MCF 10A (cell line): ENCODE measurements at regions of chr7 and their contacts with region 1.

Region 1: DNA sequence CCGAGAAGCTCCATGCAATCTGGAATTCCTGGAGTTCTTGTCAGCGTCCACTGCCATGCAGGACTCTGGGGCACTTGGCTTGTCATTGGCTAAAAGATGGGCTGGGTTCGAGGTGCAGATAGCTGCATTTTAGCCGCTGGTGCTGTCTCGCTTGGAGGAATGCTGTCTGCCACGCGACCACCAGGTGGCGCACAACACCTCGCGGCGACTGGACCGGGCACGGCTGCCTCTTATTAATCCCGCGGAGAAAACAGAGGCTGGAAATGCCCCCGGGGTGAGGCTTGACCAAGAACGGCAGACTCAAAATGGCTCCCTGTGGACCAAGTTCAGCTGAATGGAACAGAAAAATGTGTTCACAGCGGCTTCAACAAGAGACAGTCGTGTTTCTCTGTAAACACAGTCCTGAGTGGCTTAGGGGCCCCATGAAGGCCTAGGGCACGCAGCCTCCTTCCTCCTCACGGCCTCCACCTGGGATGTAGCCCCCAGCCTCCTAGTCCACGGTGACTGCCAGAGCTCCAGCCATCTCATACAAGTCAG is 46.2 kb downstream of the AOC1 start:
- DNase-seq: peak; percentile 61
- H3K4me3 Mint-ChIP-seq: no peak overlapping the region
- H3K27ac Mint-ChIP-seq: no peak overlapping the region
- H3K4me1 Mint-ChIP-seq: peaks cover 14% of the 10 kb centered on the region
- H3K27me3 Mint-ChIP-seq: peaks cover 26% of the 10 kb centered on the region
- CTCF ChIP-seq: peak; percentile 86

Region 2: GRCh38 chr7:150909200-150909995 is 10.9 kb after region 1 on chr7:
- CTCF ChIA-PET with region 1: interaction called, 12 read pairs
- POLR2A ChIA-PET with region 1: interaction called, 4 read pairs
- intact Hi-C with region 1: no loop called
- DNase-seq: no peak
- H3K4me3 Mint-ChIP-seq: no peak overlapping the region
- H3K27ac Mint-ChIP-seq: no peak overlapping the region
- H3K4me1 Mint-ChIP-seq: peaks cover 4% of the 10 kb centered on the region
- H3K27me3 Mint-ChIP-seq: peaks cover 42% of the 10 kb centered on the region
- CTCF ChIP-seq: no peak

Region 3: GRCh38 chr7:150931199-150931869 is 32.8 kb after region 1 on chr7:
- CTCF ChIA-PET with region 1: interaction called, 10 read pairs
- POLR2A ChIA-PET with region 1: no interaction called
- intact Hi-C with region 1: no loop called
- DNase-seq: no peak
- H3K4me3 Mint-ChIP-seq: no peak overlapping the region
- H3K27ac Mint-ChIP-seq: no peak overlapping the region
- H3K4me1 Mint-ChIP-seq: no peaks in the 10 kb centered on the region
- H3K27me3 Mint-ChIP-seq: peaks cover 4% of the 10 kb centered on the region
- CTCF ChIP-seq: no peak

Region 4: GRCh38 chr7:150962553-150963399 is 64.2 kb after region 1 on chr7:
- CTCF ChIA-PET with region 1: interaction called, 11 read pairs
- POLR2A ChIA-PET with region 1: no interaction called
- intact Hi-C with region 1: no loop called
- DNase-seq: peak; percentile 31
- H3K4me3 Mint-ChIP-seq: no peak overlapping the region
- H3K27ac Mint-ChIP-seq: no peak overlapping the region
- H3K4me1 Mint-ChIP-seq: no peaks in the 10 kb centered on the region
- H3K27me3 Mint-ChIP-seq: peaks cover 32% of the 10 kb centered on the region
- CTCF ChIP-seq: peak; percentile 92

Region 5: DNA sequence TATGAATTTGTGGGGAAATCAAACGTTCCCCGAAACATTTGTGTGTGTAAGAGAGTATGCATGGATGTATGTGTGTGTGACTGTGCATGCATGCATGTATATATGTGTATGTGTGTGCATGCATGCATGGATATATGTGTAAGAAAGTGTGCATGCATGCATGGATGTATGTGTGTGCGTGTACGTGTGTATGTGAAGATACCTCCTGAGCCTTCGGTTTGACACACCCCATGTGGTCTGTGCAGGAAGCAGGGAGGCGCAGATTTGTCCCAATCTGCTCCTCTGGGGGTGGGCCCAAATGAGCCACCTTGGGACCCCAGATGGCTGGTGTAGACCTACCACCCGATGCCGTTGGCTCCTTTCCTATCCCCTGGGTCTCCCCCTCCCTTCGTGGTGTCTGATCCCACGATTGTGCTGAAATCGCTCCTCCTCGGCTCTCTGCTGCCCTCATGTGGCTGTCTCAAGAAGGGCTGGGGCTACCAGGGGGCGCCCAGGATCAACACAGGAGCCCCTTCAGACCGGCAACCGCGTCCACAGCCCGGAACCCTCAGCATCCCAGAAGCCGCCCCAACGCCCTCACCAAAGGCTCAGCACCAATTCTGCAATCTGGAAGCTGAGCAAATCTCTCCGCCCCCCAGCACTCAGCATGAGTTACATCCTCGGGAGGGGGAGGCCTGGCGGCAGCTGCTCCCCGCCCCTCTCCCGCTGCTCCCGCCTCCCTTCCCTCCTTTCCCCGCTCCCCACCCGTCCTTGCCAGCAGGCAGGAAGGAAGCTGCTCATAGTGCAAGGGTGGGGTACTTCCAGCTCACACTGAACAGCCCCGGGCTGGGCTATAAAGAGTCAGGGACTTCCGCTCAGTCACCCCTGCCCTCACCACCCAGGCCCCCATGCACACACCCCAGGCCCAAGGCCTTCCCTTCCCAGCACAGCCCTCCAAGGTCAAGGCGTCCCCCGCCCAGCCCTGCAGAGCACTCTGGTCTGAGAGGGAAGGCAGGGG is 90.0 kb after region 1 on chr7:
- CTCF ChIA-PET with region 1: interaction called, 43 read pairs
- POLR2A ChIA-PET with region 1: interaction called, 3 read pairs
- intact Hi-C with region 1: loop called (anchors 1 kb)
- DNase-seq: peak; percentile 43
- H3K4me3 Mint-ChIP-seq: no peak overlapping the region
- H3K27ac Mint-ChIP-seq: no peak overlapping the region
- H3K4me1 Mint-ChIP-seq: peaks cover 7% of the 10 kb centered on the region
- H3K27me3 Mint-ChIP-seq: peaks cover 11% of the 10 kb centered on the region
- CTCF ChIP-seq: peak; percentile 82

Region 6: DNA sequence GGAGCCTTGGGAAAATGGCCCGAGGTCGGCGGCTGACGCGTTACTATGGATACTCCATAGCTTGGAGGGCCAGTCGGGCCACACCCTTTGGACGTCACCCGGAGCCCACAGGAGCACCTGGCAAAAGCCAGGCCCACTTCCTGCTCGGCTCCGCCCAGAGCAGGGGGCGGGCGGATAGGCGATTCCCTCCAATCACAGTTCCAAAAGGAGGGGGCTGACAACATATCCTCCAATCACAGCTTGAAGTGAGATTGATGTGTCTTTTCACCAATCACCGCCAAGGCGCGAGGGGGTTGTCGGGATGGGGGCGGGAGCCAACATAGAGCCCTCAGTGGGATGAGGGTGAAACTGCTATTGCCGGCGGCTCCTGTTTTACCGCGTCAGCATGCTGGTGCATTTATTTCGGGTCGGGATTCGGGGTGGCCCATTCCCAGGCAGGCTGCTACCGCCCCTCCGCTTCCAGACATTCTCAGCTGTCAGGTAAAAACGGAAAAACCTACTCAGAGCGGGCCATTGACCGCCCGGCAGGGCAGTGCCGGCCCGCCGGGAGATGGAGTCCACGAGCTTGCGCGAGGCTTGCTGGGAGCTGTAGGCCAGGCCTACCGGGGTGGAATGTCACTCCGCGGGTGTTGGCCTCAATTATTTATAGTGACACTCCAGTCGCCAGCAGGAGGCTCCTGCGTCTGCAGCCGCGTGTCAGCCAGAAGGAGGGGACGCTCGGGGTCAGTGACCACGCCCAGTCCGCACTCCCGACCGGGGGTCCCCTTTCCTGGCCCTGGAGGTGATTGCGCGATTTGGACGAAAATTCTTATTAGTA is 129.8 kb after region 1 on chr7 and contains the start of gene ABCB8:
- CTCF ChIA-PET with region 1: interaction called, 11 read pairs
- POLR2A ChIA-PET with region 1: no interaction called
- intact Hi-C with region 1: no loop called
- DNase-seq: peak; percentile 99
- H3K4me3 Mint-ChIP-seq: peak within 1 kb of the TSS; percentile 97
- H3K27ac Mint-ChIP-seq: peak within 1 kb of the TSS; percentile 100
- H3K4me1 Mint-ChIP-seq: peaks cover 29% of the 10 kb centered on the region
- H3K27me3 Mint-ChIP-seq: no peaks in the 10 kb centered on the region
- CTCF ChIP-seq: peak; percentile 37
- total RNA-seq, gene ABCB8: 73.4 and 76.1 TPM in 2 replicates

Region 7: GRCh38 chr7:151172273-151173141 is 274.0 kb after region 1 on chr7:
- CTCF ChIA-PET with region 1: no interaction called
- POLR2A ChIA-PET with region 1: no interaction called
- intact Hi-C with region 1: loop called (anchors 1 kb)
- DNase-seq: peak; percentile 74
- H3K4me3 Mint-ChIP-seq: no peak overlapping the region
- H3K27ac Mint-ChIP-seq: no peak overlapping the region
- H3K4me1 Mint-ChIP-seq: no peaks in the 10 kb centered on the region
- H3K27me3 Mint-ChIP-seq: peaks cover 71% of the 10 kb centered on the region
- CTCF ChIP-seq: peak; percentile 100